Heart right ventricle (tissue), 16 donors: ENCODE measurements at regions of chr17 and their contacts with region 1.

Region 1: GRCh38 chr17:12744298-12744697 is 45.0 kb upstream of the ARHGAP44 start:
- DNase-seq: peak; percentile 43 to 68
- ATAC-seq: peak; percentile 70 to 97 (median 91)
- H3K4me3 ChIP-seq: peak overlapping the region in 8 of 10 donors; percentile 1 to 38 (median 14)
- H3K27ac ChIP-seq: peak overlapping the region; percentile 24 to 87 (median 79)
- H3K4me1 ChIP-seq: peaks cover 0 to 23% (median 7%) of the 10 kb centered on the region in 9 donors
- H3K27me3 ChIP-seq: no peaks in the 10 kb centered on the region
- CTCF ChIP-seq: no peak

Region 2: DNA sequence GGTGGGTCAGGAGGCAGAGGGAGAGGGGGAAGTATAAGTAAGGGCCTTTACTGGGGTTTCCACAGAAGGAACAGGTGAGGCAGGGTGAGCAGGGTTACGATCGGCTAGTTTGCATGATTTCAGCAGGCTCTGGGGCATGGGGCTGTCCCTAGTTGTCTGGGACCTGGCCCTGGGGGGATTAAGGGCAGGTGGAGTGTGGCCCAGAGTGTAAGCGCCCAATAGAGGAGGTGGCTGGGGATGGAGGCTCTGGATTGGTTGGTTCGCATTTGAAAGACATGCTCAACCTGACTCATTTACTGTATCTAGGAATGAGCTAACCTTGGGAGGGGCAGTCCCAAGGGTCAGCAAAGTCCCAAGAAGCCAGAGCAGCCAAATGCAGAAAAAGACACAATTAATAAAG is 493.3 kb before region 1 on chr17:
- intact Hi-C with region 1: loop called in 5 of 10 experiments (anchors 5 to 10 kb)
- DNase-seq: no peak
- ATAC-seq: no peak
- H3K4me3 ChIP-seq: no peak overlapping the region
- H3K27ac ChIP-seq: no peak overlapping the region
- H3K4me1 ChIP-seq: peaks cover 0 to 11% (median 0%) of the 10 kb centered on the region in 9 donors
- H3K27me3 ChIP-seq: peaks cover 0 to 2% (median 0%) of the 10 kb centered on the region in 7 donors
- CTCF ChIP-seq: no peak

Region 3: GRCh38 chr17:12545877-12546513 is 198.3 kb before region 1 on chr17:
- intact Hi-C with region 1: loop called in 7 of 10 experiments (anchors 5 to 10 kb)
- DNase-seq: peak in 1 of 2 donors; percentile 31
- ATAC-seq: peak; percentile 73 to 90 (median 84)
- H3K4me3 ChIP-seq: no peak overlapping the region
- H3K27ac ChIP-seq: no peak overlapping the region
- H3K4me1 ChIP-seq: peaks cover 0 to 11% (median 0%) of the 10 kb centered on the region in 9 donors
- H3K27me3 ChIP-seq: no peaks in the 10 kb centered on the region
- CTCF ChIP-seq: peak; percentile 45 to 78 (median 72)

Region 4: DNA sequence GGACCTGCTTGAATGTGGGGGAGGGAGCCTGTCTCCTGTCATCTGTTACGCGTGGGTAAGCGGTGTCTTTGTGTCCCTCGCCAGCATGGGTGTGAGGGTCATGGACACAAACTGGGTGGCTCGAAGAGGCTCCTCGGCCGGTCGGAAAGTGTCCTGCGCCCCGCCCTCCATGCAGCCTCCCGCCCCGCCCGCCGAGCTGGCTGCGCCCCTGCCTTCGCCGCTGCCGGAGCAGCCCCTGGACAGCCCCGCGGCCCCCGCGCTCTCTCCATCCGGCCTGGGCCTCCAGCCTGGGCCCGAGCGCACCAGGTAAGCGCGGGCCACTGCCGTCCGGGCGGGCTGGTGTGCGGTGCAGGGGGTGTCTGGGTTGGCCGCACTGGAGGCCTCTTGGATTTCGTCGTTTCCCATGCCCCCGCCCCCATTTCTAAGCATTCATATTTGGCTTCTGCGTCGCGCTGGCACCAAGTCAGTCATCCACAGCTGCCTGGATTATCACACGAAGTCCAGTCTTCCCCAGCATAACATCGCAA is 229.8 kb after region 1 on chr17:
- intact Hi-C with region 1: no loop called
- DNase-seq: no peak
- ATAC-seq: peak; percentile 42 to 81 (median 70)
- H3K4me3 ChIP-seq: peak overlapping the region; percentile 14 to 52 (median 41)
- H3K27ac ChIP-seq: peak overlapping the region in 2 of 10 donors; percentile 4 to 25
- H3K4me1 ChIP-seq: peaks cover 0 to 14% (median 4%) of the 10 kb centered on the region in 9 donors
- H3K27me3 ChIP-seq: peaks cover 0 to 16% (median 0%) of the 10 kb centered on the region in 7 donors
- CTCF ChIP-seq: no peak

Region 5: DNA sequence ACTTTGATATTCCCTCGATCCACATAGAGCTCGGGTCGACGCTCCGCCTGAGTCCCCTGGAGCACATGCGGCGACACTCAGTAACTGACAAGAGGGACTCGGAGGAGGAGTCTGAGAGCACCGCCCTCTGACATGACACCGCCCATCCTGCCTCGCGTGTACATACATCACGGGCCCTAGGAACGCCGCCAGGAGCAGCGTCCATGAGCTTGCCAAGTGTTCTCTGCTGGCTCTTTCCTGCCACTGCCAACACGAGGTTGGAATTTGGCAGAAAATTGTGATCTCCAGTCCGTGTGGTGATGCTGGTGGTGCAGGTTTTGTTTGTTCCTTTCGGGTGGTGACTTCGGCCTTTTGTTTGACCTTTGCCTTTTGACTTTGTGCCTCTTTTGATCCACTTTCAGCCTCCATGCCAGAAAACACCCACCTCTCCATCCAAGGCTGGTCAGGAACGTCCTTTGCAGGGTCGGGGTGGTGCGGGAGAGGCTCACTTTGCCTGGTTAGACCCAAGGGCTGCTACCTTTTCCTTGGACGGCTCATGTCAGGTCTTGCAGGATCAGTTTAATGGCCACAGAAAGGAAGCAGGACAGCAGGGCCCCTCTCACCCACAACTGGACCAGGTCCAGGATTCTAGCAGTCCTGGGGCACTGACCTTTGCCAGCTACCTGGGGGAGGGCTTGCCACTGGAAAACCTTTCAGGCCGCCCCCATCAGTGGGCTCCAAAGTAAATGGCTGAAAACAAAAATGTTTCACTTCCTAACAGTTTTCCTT is 245.9 kb after region 1 on chr17:
- intact Hi-C with region 1: no loop called
- DNase-seq: peak; percentile 72 to 79
- ATAC-seq: peak; percentile 47 to 87 (median 80)
- H3K4me3 ChIP-seq: no peak overlapping the region
- H3K27ac ChIP-seq: peak overlapping the region in 7 of 10 donors; percentile 14 to 69 (median 49)
- H3K4me1 ChIP-seq: peaks cover 5 to 43% (median 23%) of the 10 kb centered on the region in 9 donors
- H3K27me3 ChIP-seq: no peaks in the 10 kb centered on the region
- CTCF ChIP-seq: no peak